Activated CD4-positive, alpha-beta memory T cell treated with anti-CD3 and anti-CD28 coated beads for 36 hours (primary cell): ENCODE measurements at regions of chr15 and their contacts with region 1.

Region 1: DNA sequence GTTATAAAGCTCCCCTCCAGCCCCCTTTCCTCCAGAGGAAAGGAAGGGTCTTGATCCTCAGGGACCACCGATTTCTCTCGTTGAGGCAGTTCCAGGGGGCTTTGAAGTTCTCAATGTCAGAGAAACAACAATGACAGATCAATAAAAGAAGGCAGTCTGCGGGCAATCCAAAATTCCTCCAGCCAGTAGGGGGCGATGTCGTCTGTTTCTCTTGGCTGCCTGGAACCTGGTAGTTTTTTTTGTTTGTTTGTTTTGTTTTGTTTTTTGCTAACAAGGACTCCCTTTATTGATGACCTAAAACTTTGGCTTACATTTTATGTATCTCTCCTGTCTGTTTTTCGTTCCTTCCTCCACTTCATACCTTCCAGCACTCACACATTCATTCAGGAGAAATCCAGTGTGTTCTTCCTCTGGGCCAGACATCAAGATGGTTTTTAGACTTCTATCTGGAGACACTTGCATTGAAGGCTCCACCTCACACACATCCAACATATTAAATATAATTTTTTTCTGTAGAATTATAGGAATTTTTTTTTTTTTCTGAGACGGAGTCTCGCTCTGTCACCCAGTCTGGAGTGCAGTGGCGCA is 276.6 kb downstream of the RPLP1 start:
- DNase-seq: peak; percentile 82
- H3K4me3 Mint-ChIP-seq: peak overlapping the region; percentile 4
- H3K27ac Mint-ChIP-seq: no peak overlapping the region
- H3K4me1 Mint-ChIP-seq: peaks cover 26% of the 10 kb centered on the region
- H3K27me3 Mint-ChIP-seq: peaks cover 4% of the 10 kb centered on the region

Region 2: DNA sequence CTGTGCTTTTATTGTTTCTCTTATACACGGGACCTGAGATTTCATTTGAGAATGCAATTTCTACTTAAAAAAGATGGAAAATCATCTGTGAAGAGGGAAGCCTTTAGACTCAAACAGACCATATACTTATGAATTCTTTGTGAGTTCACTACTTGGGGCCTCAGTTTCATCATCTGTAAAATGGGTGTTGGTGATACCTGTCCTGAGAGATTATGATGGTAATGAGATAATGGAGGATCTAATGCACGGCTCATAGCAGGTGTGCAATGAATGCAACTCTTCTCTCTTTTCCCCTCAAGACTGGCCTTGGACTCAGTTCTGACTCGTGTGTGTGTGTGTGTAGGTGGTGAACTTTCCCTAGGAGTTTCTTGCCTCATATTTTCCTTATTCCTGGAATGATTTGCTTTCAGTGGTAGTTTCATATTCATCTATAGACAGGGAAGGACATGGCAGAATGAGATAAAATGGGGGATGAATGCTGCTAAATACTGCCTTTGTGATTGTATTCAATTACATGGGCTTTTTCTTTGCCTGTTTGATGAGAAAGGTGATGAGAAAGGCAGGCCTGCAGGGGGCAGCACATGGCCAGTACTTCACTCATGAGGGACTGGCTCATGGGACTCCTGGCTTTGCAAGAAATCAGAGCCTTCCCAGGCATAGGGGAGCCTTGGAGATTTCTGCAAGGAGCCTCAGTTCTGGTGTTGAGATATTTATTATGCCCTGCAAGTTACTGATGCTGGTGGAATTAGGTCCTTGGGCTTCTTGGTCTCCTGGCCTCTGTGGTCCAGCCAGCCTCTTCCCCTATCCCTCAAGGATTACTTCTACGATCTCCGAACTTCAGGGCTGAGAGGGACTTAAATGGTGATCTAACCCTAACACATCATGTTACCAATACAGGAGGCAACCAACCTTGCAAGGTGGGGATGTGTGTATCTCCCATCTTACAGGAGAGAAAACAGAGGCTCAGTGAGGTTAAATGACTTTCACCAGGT is 205.9 kb before region 1 on chr15:
- CTCF ChIA-PET with region 1: no interaction called
- POLR2A ChIA-PET with region 1: no interaction called
- intact Hi-C with region 1: loop called (anchors 5 kb)
- DNase-seq: peak; percentile 84
- H3K4me3 Mint-ChIP-seq: no peak overlapping the region
- H3K27ac Mint-ChIP-seq: no peak overlapping the region
- H3K4me1 Mint-ChIP-seq: peaks cover 4% of the 10 kb centered on the region
- H3K27me3 Mint-ChIP-seq: peaks cover 2% of the 10 kb centered on the region

Region 3: GRCh38 chr15:69743091-69743490 is 13.8 kb after region 1 on chr15:
- CTCF ChIA-PET with region 1: interaction called, 12 read pairs
- POLR2A ChIA-PET with region 1: no interaction called
- intact Hi-C with region 1: no loop called
- DNase-seq: no peak
- H3K4me3 Mint-ChIP-seq: no peak overlapping the region
- H3K27ac Mint-ChIP-seq: no peak overlapping the region
- H3K4me1 Mint-ChIP-seq: peaks cover 26% of the 10 kb centered on the region
- H3K27me3 Mint-ChIP-seq: peaks cover 8% of the 10 kb centered on the region